ENCODE measurements at regions of chr17 and their contacts with region 1.

Region 1: GRCh38 chr17:4412933-4413831 is 20.6 kb upstream of the SPNS3 start:
- DNase-seq: peak; percentile 96
- H3K4me3 ChIP-seq: no peak overlapping the region
- H3K27ac ChIP-seq: no peak overlapping the region
- H3K4me1 ChIP-seq: peaks cover 2% of the 10 kb centered on the region
- H3K27me3 ChIP-seq: no peaks in the 10 kb centered on the region
- CTCF ChIP-seq: peak; percentile 86 to 96 (median 94)
- POLR2A ChIP-seq: no peak

Region 2: DNA sequence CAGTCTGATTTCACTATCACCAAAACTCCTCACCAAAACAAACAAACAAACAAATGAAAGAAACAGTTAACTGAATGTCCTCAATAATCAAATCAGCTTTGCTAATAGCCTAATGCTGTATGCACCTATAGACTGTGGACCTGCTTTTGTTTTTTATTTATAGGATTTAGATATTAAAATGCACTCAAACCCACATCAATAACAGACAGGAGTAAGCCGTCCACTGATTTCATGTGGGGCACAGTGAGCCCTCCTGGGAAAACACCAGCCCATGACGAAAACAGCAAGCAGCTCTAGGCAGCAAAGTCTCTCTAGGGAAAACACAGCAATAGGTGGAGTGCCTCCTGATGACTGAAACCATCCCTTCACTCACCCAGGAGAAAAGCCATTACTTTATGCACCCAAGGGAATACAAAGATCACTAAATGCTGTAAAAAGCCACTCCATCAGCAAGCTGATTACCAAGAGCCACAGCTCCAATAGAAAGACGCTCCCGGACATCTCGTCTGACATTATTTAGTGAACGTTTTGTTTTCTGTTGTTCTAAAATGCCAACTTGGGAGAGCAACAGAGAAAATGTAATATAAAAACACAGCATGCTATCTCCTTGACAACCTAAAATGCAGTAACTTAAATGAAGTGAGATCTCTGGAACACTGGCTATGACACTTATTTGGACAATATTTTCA is 197.2 kb before region 1 on chr17:
- intact Hi-C with region 1: loop called (anchors 5 kb)
- DNase-seq: no peak
- H3K4me3 ChIP-seq: no peak overlapping the region
- H3K27ac ChIP-seq: no peak overlapping the region
- H3K4me1 ChIP-seq: peaks cover 4% of the 10 kb centered on the region
- H3K27me3 ChIP-seq: no peaks in the 10 kb centered on the region
- CTCF ChIP-seq: no peak
- POLR2A ChIP-seq: no peak

Region 3: DNA sequence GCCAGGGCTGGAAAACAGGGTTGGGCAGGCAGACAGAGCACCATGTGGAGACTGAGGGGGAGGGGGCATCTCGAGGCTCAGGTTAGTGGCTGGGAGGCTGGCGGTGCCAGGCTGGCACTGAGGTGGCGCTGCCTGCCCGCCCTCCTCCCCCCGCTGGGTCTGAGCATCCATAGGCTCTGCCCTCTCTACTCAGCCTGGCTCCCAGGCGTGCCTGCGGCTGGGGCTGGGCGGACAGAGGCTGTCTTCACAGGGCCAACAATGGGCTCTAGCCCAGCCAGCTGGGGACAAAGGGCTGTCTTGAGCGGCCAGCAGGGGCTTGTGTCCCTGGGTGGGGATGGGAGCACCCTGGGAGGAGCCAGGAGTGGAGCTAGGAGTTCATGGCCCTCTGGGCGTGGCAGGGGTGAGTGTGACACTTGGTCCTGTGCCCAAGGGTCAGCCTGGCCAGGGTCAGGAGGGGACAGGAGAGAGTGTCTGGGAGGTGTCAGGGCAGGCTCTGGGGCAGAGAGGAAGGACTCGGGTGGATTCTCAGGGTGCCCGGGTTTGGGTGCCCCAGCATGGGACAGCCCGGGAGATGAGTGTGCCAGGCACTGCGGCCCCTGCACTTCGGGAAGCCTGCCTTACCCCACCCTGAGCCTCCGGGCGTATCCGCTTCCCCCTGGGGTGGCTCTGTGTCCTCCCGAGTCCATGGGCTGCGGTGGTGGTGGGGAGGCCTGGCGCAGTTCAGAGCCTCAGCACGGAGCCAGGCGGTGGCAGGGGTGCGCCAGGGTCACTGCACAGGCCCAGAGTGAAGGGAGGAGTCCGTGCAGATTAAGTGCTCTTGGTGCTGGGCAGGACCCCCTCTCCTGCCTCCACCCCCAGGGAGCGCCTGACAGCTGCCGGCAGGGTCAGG is 121.1 kb after region 1 on chr17:
- intact Hi-C with region 1: no loop called
- DNase-seq: no peak
- H3K4me3 ChIP-seq: no peak overlapping the region
- H3K27ac ChIP-seq: no peak overlapping the region
- H3K4me1 ChIP-seq: peaks cover 41% of the 10 kb centered on the region
- H3K27me3 ChIP-seq: no peaks in the 10 kb centered on the region
- CTCF ChIP-seq: no peak
- POLR2A ChIP-seq: no peak

Measured in testis (tissue), 5 donors.